Heart left ventricle (tissue), 16 donors: ENCODE measurements at regions of chr5 and their contacts with region 1.

Region 1: GRCh38 chr5:138832218-138832617 is 42.9 kb downstream of the LRRTM2 start:
- DNase-seq: no peak
- ATAC-seq: no peak
- H3K4me3 ChIP-seq: no peak overlapping the region
- H3K27ac ChIP-seq: no peak overlapping the region
- H3K4me1 ChIP-seq: peaks cover 0 to 62% (median 14%) of the 10 kb centered on the region in 12 donors
- H3K27me3 ChIP-seq: no peaks in the 10 kb centered on the region
- CTCF ChIP-seq: no peak
- POLR2A ChIP-seq: no peak

Region 2: GRCh38 chr5:139061274-139061673 is 229.1 kb after region 1 on chr5:
- intact Hi-C with region 1: loop called in 1 of 10 experiments (anchors 10 kb)
- DNase-seq: peak; percentile 53 to 81 (median 65)
- ATAC-seq: peak; percentile 69 to 91 (median 84)
- H3K4me3 ChIP-seq: no peak overlapping the region
- H3K27ac ChIP-seq: peak overlapping the region in 4 of 12 donors; percentile 9 to 42 (median 38)
- H3K4me1 ChIP-seq: peaks cover 0 to 38% (median 14%) of the 10 kb centered on the region in 12 donors
- H3K27me3 ChIP-seq: no peaks in the 10 kb centered on the region
- CTCF ChIP-seq: no peak
- POLR2A ChIP-seq: no peak